Panc1 (cell line): ENCODE measurements at regions of chr5 and their contacts with region 1.

Region 1: GRCh38 chr5:56481428-56482357 is 248.6 kb upstream of the ANKRD55 start:
- DNase-seq: no peak
- ATAC-seq: peak; percentile 68
- H3K4me3 ChIP-seq: peak overlapping the region; percentile 37 to 64
- H3K27ac ChIP-seq: no peak overlapping the region
- H3K4me1 ChIP-seq: 0 out of 2 replicates have a peak, but pooled peaks cover 2% of the 10 kb centered on the region
- H3K27me3 ChIP-seq: 0 out of 2 replicates have a peak, but pooled peaks cover 3% of the 10 kb centered on the region
- CTCF ChIP-seq: peak; percentile 55

Region 2: DNA sequence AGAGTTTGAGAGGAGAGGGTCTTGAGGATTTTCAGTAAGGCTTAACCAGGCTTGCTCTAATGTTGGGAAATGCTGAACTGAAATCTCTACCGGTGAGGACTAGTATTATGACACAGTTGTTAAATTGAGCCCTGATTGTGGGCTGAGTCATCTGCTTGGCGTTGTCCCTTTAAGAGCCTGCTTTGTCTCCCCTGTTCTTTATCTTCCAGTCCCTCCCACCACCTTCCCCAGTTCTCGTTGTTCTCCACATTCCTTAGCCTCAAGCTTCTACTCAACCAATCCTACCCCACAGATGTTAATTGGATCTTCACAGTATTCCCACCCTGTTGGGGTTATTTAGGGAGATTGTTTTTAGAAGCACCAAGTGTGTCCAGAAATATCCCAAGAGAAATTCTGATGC is 306.2 kb before region 1 on chr5:
- CTCF ChIA-PET with region 1: no interaction called
- POLR2A ChIA-PET with region 1: no interaction called
- in situ Hi-C with region 1: no loop called
- intact Hi-C with region 1: no loop called
- DNase-seq: no peak
- ATAC-seq: no peak
- H3K4me3 ChIP-seq: no peak overlapping the region
- H3K27ac ChIP-seq: no peak overlapping the region
- H3K4me1 ChIP-seq: no peaks in the 10 kb centered on the region
- H3K27me3 ChIP-seq: no peaks in the 10 kb centered on the region
- CTCF ChIP-seq: no peak

Region 3: DNA sequence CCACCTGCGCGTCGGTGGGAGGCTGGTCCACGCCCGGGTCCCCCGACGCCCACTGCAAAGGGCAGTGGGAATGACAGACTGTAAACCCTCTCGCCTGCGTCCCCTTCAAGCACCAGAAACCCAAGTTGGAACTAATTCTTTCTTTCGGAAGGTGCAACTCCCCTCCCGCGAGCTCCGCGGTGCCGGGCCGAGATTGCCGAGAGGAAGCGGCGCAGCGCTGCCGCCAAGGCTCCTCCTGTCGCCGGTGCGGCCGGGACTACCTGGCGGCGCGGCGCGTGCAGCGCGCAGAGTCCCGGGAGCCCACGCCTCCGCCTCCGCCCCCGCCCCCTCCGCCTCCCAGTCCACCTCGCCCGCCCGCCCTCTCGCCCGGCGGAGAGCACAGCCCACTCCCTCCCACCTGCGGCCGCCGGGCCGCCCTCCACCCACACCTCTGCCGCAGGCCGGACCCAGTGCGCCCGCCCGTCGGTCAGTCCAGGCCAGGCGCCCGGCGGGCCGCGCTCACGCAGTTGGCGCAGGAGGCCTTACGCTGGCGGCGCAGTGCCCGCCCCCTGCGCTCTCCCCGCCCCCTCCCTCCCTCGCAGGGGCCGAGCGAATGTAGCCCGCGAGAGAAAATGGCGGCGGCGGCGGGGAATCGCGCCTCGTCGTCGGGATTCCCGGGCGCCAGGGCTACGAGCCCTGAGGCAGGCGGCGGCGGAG is 333.4 kb after region 1 on chr5 and contains the start of gene MAP3K1:
- CTCF ChIA-PET with region 1: no interaction called
- POLR2A ChIA-PET with region 1: no interaction called
- in situ Hi-C with region 1: no loop called
- intact Hi-C with region 1: loop called (anchors 10 kb)
- DNase-seq: no peak
- ATAC-seq: peak; percentile 87
- H3K4me3 ChIP-seq: peak within 1 kb of the TSS; percentile 76 to 81
- H3K27ac ChIP-seq: peak within 1 kb of the TSS; percentile 75; the same call in 1 of the 2 replicates
- H3K4me1 ChIP-seq: peaks cover 9% of the 10 kb centered on the region; the same call in 1 of the 2 replicates
- H3K27me3 ChIP-seq: no peaks in the 10 kb centered on the region; the same call in 1 of the 2 replicates
- CTCF ChIP-seq: no peak
- total RNA-seq, gene MAP3K1: 6.2 TPM

Region 4: GRCh38 chr5:56838409-56839039 is 356.8 kb after region 1 on chr5:
- CTCF ChIA-PET with region 1: no interaction called
- POLR2A ChIA-PET with region 1: no interaction called
- in situ Hi-C with region 1: no loop called
- intact Hi-C with region 1: loop called (anchors 10 kb)
- DNase-seq: no peak
- ATAC-seq: peak; percentile 76
- H3K4me3 ChIP-seq: peak overlapping the region; percentile 7 to 23; a peak in 3 of 4 replicates
- H3K27ac ChIP-seq: peak overlapping the region; percentile 70
- H3K4me1 ChIP-seq: peaks cover 6% of the 10 kb centered on the region; the same call in 1 of the 2 replicates
- H3K27me3 ChIP-seq: no peaks in the 10 kb centered on the region
- CTCF ChIP-seq: peak; percentile 59